Aorta (tissue), 5 donors: ENCODE measurements at regions of chr12 and their contacts with region 1.

Region 1: GRCh38 chr12:52372216-52373154 is 5.2 kb upstream of the KRT85 start:
- DNase-seq: peak; percentile 85 to 91
- ATAC-seq: peak; percentile 85
- H3K4me3 ChIP-seq: no peak overlapping the region
- H3K27ac ChIP-seq: no peak overlapping the region
- H3K4me1 ChIP-seq: no peaks in the 10 kb centered on the region
- H3K27me3 ChIP-seq: no peaks in the 10 kb centered on the region

Region 2: DNA sequence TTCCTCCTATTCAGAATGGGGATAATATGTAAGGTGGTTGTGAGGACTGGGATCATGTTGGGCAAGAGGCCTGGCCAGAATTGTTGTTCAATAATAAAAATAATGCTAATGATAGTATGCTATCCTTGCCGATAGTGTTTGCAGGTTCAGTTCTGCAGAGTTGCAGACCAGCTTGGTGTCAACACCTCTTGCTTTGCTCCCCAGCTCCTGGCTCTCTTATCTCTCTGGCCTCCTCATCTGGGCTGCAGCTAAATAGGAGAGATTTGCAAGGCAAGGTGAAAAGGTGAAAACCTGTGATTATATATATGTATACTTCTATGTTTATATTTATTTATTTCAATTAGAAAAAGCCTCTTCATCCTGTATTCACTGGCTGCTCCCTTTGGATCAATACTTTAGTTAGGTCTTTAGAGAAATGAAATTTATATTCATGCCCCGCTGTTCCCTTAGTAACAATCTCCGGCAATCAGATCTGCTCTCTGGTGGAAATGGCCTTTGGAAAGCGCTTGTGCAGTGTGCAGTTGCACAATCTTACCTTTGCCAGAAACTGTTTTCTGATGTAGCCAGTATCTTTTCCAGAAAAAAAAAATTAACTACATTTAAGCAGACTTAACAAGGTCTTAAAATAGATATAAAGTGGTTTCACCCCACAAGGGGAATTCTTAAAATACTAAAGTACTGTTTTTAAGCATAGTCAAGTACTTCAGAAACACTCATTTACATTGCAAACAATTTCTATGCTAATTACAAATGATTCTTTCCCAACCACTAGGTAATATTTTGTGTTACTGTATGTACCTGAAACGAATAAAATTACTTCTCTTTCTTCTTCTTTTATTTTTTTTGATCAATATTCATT is 440.0 kb before region 1 on chr12:
- intact Hi-C with region 1: loop called in 1 of 2 experiments (anchors 5 kb)
- DNase-seq: no peak
- ATAC-seq: no peak
- H3K4me3 ChIP-seq: no peak overlapping the region
- H3K27ac ChIP-seq: no peak overlapping the region
- H3K4me1 ChIP-seq: no peaks in the 10 kb centered on the region
- H3K27me3 ChIP-seq: no peaks in the 10 kb centered on the region

Region 3: GRCh38 chr12:52506858-52507715 is 134.6 kb after region 1 on chr12:
- intact Hi-C with region 1: loop called in 1 of 2 experiments (anchors 10 kb)
- DNase-seq: no peak
- ATAC-seq: no peak
- H3K4me3 ChIP-seq: no peak overlapping the region
- H3K27ac ChIP-seq: no peak overlapping the region
- H3K4me1 ChIP-seq: no peaks in the 10 kb centered on the region
- H3K27me3 ChIP-seq: no peaks in the 10 kb centered on the region

Region 4: GRCh38 chr12:52879394-52880351 is 507.2 kb after region 1 on chr12:
- intact Hi-C with region 1: loop called (anchors 1 to 5 kb)
- DNase-seq: peak; percentile 85 to 88
- ATAC-seq: peak; percentile 90
- H3K4me3 ChIP-seq: no peak overlapping the region
- H3K27ac ChIP-seq: no peak overlapping the region
- H3K4me1 ChIP-seq: no peaks in the 10 kb centered on the region
- H3K27me3 ChIP-seq: no peaks in the 10 kb centered on the region